ENCODE measurements at regions of chr15 and their contacts with region 1.

Region 1: DNA sequence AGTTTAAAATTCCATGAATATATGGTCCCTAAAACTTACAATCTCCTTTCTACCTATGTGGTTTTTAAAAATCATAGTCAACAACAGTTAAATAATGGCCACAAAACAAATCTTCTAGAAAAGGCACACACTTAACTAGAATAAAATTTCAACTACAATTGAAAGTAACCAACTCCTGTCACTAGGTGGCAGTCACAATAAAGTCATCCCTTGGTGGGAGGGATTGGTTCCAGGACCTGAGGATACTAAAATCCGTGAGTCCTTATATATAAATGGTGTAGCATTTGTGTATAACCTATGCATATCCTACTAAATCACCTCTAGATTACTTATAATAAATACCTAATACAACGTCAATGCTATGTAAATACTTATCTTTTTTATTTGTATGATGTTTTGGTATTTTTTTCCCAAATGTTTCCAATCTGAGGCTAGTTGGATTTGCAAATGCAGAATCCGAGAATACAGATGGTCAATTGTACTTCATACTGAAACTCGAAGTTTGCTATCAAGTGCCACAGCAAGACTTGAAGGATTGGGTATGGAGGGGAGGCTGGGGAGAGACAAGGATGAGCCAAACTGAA is 172.6 kb downstream of the FMN1 start:
- DNase-seq: peak in 2 of 4 donors; percentile 27 to 55
- ATAC-seq: peak; percentile 83
- H3K4me3 ChIP-seq: no peak overlapping the region
- H3K27ac ChIP-seq: peak overlapping the region; percentile 23 to 35
- H3K4me1 ChIP-seq: peaks cover 5 to 14% of the 10 kb centered on the region in 2 donors
- H3K27me3 ChIP-seq: no peaks in the 10 kb centered on the region
- CTCF ChIP-seq: peak; percentile 41 to 50

Region 2: DNA sequence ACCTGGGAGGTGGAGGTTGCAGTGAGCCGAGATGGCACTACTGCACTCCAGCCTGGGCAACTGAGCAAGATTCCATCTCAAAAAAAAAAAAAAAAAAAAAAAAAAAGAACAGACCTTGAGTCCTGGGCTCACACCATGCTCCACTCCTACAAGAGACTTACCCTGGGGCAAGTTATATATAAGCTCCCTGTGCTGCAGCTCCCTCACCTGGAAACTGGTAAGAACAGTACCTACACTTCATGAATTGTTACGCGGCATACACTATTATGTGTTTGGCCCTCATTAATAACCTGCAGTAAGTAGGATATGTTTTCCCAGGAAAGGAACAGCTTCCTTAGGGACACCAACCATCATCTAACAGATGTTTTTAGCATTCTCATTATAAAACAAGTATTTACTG is 53.0 kb after region 1 on chr15:
- intact Hi-C with region 1: loop called in 1 of 2 experiments (anchors 10 kb)
- DNase-seq: no peak
- ATAC-seq: peak; percentile 91
- H3K4me3 ChIP-seq: no peak overlapping the region
- H3K27ac ChIP-seq: no peak overlapping the region
- H3K4me1 ChIP-seq: no peaks in the 10 kb centered on the region
- H3K27me3 ChIP-seq: no peaks in the 10 kb centered on the region
- CTCF ChIP-seq: peak in 1 of 2 donors; percentile 15

Region 3: DNA sequence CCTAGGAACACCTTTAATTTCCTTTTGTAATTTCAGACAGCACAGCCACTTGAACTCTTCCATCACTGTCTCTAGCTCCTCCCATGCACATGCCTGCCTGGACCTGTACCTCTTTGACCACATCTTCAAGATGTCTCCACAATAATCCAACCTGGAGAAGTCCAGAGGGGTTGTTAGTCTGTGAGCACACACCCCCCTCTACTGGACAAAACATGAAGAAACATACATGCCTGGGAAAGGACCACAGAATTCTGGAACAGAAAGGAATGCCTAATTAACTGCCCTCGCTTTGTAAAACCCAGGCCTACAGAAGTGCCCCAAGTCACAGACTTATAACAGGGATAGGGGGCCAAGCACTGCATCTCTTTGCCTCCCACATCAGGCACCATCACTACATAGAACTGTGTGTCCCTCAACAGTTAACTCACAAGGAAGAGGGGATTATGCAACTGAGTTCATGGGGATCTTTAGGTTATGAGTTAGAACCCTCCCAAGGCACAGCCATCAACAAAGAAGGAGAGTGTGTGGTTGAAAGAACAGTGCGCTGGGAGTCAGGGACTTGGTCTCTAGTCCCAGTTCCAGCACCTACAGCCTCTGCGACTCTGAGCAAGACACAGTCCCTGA is 110.9 kb after region 1 on chr15:
- intact Hi-C with region 1: loop called in 1 of 2 experiments (anchors 10 kb)
- DNase-seq: peak in 1 of 4 donors; percentile 64
- ATAC-seq: peak; percentile 81
- H3K4me3 ChIP-seq: no peak overlapping the region
- H3K27ac ChIP-seq: no peak overlapping the region
- H3K4me1 ChIP-seq: peaks cover 9 to 48% of the 10 kb centered on the region in 2 donors
- H3K27me3 ChIP-seq: no peaks in the 10 kb centered on the region
- CTCF ChIP-seq: peak; percentile 49 to 53

Measured in left lung (tissue), 14 donors.